ENCODE measurements at regions of chr22 and their contacts with region 1.

Region 1: DNA sequence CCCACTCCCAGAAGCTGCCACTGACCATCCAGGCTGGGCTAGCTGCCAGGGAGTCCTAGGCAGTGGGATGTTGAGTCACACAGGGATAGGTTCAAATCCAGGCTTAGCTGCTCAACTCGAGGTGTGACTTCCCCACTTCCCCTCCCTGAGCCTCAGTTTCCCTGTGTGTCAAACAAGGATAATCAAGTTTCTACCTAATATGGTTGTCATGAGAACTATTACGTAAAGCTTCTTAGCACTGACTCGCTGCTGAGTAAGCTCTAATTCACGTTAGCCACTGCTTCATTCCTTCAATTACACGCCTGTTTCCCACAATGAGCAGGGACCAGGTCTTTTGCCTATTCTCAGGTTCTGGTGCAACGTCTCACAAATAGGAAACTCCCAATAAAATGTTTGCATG is 67.7 kb downstream of the SEZ6L start:
- DNase-seq: no peak
- ATAC-seq: no peak

Region 2: DNA sequence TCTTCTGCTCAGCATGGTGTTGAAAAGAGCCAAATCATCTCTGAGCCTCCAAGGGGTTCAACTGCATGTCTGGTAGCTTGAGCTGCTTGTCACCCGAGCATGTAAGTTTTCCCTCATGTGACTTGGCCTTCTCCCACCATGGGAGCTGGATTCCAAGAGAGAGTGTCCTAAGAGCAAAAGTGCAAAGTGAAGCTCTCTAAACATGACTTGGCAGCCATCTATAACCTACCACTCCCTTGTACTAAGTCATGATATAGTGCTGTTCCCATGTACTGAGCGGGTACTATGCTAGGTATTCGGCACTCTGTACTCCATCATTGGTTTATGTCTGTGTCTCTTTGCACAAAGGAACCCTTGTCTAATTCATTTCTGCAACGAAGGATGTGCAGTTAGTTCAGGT is 48.6 kb before region 1 on chr22:
- intact Hi-C with region 1: loop called in 1 of 2 experiments (anchors 5 kb)
- DNase-seq: no peak
- ATAC-seq: no peak

Region 3: GRCh38 chr22:26273011-26273675 is 36.2 kb after region 1 on chr22:
- intact Hi-C with region 1: no loop called
- DNase-seq: no peak
- ATAC-seq: no peak

Region 4: DNA sequence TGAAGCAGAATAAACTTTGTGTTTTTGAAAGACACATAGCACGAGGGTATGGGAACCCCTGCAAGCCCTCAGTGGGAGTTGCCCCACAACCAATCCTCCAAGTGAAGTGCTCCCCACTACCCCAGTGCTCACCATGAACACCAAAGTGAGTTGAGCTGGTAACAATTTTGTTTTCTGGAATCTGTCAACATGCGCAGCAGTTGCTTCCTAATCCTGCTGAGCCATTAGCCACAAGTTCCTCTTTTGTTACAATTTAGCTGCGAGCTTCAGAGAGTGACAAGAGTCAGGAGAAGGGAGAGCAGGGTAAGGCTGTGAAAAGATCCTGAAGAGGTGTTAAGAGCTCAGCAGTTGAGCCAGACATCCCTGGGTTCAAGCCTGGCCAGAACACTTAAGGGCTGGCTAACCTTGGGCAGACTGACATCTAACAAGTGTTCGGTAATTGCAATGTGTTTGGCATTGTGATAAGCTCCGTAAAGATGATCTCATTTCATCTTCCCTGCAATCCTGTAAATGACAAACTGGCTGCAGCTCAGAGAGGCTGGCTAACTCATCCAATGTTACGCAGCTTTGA is 167.9 kb after region 1 on chr22:
- intact Hi-C with region 1: no loop called
- DNase-seq: no peak
- ATAC-seq: peak; percentile 76 to 87

Measured in left cardiac atrium (tissue), 4 donors.